Activated CD8-positive, alpha-beta T cell treated with anti-CD3 and anti-CD28 coated beads, Interleukin-2, amount 10 ng/mL, durations not matched to agents 7 days and 5 days (primary cell): ENCODE measurements at regions of chr17 and their contacts with region 1.

Region 1: DNA sequence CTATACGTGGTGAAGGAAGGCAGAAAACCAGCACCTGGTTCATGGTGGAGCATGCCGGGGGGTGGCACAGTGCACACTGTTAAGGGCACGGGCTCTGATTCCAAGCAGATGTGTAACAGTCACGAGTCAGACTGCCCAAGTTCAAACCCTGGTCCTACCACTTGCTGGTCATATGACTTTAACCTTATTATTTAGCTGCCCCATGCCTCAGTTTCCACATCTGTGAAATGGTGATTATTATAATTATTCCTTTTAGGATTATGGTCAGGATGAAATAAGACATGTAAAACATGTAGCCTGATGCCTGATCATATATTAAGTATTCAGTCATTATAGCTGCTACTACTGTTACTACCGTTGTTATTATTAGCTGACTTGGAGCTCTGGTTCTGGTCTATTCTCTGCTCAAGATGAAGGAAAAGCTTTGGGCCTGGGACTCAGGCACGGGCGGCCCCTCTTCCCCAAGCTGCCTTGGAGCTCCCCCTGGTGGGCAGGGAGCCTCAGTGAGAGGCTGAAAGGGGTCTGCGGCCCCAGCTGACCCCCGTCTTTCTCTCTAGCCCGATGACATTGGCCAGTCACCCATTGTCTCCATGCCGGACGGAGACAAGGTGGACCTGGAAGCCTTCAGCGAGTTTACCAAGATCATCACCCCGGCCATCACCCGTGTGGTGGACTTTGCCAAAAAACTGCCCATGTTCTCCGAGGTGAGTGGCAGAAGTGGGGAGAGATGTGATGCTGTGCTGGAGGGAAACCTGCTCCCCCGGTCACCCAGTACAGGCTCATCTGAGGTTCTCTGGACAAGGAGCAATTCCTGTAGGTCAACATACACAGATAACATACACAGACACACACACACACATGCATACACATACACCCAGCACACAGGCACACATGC is 14.0 kb downstream of the NR1D1 start:
- DNase-seq: peak; percentile 60
- ATAC-seq: peak; percentile 48
- H3K4me3 Mint-ChIP-seq: no peak overlapping the region
- H3K27ac Mint-ChIP-seq: no peak overlapping the region
- H3K4me1 Mint-ChIP-seq: no peaks in the 10 kb centered on the region
- H3K27me3 Mint-ChIP-seq: no peaks in the 10 kb centered on the region

Region 2: GRCh38 chr17:40019140-40019991 is 67.0 kb before region 1 on chr17:
- CTCF ChIA-PET with region 1: interaction called, 18 read pairs
- POLR2A ChIA-PET with region 1: no interaction called
- DNase-seq: no peak
- ATAC-seq: no peak
- H3K4me3 Mint-ChIP-seq: no peak overlapping the region
- H3K27ac Mint-ChIP-seq: no peak overlapping the region
- H3K4me1 Mint-ChIP-seq: peaks cover 3% of the 10 kb centered on the region
- H3K27me3 Mint-ChIP-seq: no peaks in the 10 kb centered on the region

Region 3: GRCh38 chr17:40062329-40063186 is 23.8 kb before region 1 on chr17 and contains the start of gene THRA:
- CTCF ChIA-PET with region 1: interaction called, 13 read pairs
- POLR2A ChIA-PET with region 1: no interaction called
- DNase-seq: peak; percentile 70
- ATAC-seq: peak; percentile 93
- H3K4me3 Mint-ChIP-seq: peak within 1 kb of the TSS; percentile 80
- H3K27ac Mint-ChIP-seq: peak within 1 kb of the TSS; percentile 46
- H3K4me1 Mint-ChIP-seq: peaks cover 36% of the 10 kb centered on the region
- H3K27me3 Mint-ChIP-seq: peaks cover 29% of the 10 kb centered on the region
- total RNA-seq, gene THRA: 8.7 to 9.7 TPM

Region 4: GRCh38 chr17:40075201-40075941 is 11.0 kb before region 1 on chr17:
- CTCF ChIA-PET with region 1: interaction called, 75 read pairs
- POLR2A ChIA-PET with region 1: interaction called, 5 read pairs
- DNase-seq: peak; percentile 75
- ATAC-seq: peak; percentile 83
- H3K4me3 Mint-ChIP-seq: no peak overlapping the region
- H3K27ac Mint-ChIP-seq: peak overlapping the region; percentile 71
- H3K4me1 Mint-ChIP-seq: peaks cover 19% of the 10 kb centered on the region
- H3K27me3 Mint-ChIP-seq: no peaks in the 10 kb centered on the region